HAP-1 (cell line): ENCODE measurements at regions of chr3 and their contacts with region 1.

Region 1: DNA sequence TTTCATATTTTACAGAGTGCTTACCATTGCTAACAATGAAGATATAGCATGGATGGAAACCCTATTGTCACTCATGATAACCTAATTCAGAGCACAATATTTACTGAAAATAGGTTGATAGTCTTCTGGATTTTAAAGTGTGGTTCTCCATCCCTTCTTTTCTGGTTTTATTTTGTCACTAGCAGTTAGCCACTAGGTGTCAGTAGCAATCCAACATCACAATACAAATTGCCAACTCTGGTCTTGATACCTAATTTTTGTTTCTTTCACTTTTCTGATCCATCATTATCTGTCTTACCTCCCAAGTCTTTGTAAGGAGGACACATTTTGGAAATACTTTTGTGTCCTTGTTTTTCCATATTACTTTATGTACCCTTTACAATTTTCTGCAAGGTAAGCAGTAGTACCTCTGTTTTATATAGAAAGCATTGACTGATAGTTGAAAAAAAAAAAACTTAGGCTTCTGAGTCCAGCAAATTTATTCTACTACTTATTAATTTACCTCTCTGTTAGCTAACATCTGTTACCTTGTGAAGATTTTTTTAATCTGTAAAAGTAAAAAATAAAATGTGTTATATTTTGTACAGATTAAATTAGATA is 28.3 kb upstream of the CRYBG3 start:
- DNase-seq: peak; percentile 15 to 54
- H3K4me3 ChIP-seq: no peak overlapping the region
- H3K4me1 ChIP-seq: no peaks in the 10 kb centered on the region
- H3K27me3 ChIP-seq: no peaks in the 10 kb centered on the region

Region 2: DNA sequence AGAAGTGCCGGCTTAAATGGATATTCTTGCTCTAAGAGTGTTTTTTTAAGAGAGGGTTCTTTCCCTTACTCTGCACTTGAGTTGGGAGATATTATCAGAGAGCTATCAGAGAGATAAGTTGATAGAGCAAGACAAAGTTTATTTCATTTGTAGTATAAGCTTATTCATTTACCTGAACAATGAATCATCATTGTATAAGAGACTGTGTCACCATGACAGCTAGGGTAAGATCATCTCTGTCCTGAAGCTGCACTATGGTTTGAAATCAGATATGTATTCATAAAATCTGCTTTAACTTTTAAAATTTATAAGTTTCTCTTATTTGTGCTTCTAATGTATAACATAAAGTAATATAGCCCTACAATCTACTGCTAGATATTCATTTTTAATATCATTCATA is 157.1 kb before region 1 on chr3:
- in situ Hi-C with region 1: no loop called
- DNase-seq: no peak
- H3K4me3 ChIP-seq: no peak overlapping the region
- H3K4me1 ChIP-seq: no peaks in the 10 kb centered on the region
- H3K27me3 ChIP-seq: no peaks in the 10 kb centered on the region

Region 3: DNA sequence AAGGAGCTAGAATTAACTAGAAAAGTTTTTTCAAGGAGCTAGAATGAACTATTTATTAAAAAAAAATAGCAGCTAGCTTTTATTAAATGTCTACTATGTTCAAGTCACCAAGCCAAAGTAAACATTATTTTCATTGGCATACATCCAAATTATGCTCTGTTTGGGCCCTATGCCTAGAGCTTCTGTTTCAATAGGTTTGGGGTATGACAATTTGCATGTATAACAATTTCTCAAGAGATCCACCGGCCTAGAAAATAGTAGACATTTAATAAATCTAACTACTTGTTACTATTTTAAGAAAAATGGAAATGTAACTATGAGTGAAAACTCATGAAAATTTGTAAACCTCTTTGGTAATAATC is 233.5 kb after region 1 on chr3:
- in situ Hi-C with region 1: loop called (anchors 5 kb)
- DNase-seq: no peak
- H3K4me3 ChIP-seq: no peak overlapping the region
- H3K4me1 ChIP-seq: peaks cover 5% of the 10 kb centered on the region
- H3K27me3 ChIP-seq: no peaks in the 10 kb centered on the region

Region 4: GRCh38 chr3:98329392-98330124 is 536.0 kb after region 1 on chr3:
- in situ Hi-C with region 1: loop called (anchors 25 kb)
- DNase-seq: peak; percentile 62 to 66
- H3K4me3 ChIP-seq: no peak overlapping the region
- H3K4me1 ChIP-seq: no peaks in the 10 kb centered on the region
- H3K27me3 ChIP-seq: peaks cover 11% of the 10 kb centered on the region